ENCODE measurements at regions of chr1 and their contacts with region 1.

Region 1: DNA sequence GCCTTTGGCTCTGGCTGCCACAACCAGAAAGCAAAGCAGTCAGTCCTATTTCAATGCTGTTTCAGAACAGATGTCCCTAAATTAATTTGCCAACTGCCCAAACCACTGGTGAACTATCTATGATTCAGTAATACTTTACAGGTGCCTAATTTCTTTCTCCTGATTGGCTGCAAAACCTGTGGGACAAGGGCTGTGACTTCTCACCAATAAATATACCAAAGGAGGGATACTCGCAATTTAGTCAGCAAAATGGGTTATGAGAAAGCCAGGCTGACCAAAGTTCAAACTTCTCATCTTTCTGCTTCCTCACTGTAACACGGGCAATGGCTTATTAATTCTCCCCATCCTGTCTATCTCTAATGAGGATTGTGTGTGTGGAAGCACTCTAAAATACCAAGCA is 12.8 kb downstream of the GPN2 start:
- DNase-seq: no peak
- H3K4me3 ChIP-seq: no peak overlapping the region
- H3K27ac ChIP-seq: no peak overlapping the region; a peak in 1 of 4 replicates
- H3K4me1 ChIP-seq: peaks cover 0 to 6% of the 10 kb centered on the region in 2 experiments; a peak in 1 of 4 replicates
- H3K27me3 ChIP-seq: no peaks in the 10 kb centered on the region
- CTCF ChIP-seq: no peak
- EP300 ChIP-seq: no peak
- RAD21 ChIP-seq: no peak

Region 2: DNA sequence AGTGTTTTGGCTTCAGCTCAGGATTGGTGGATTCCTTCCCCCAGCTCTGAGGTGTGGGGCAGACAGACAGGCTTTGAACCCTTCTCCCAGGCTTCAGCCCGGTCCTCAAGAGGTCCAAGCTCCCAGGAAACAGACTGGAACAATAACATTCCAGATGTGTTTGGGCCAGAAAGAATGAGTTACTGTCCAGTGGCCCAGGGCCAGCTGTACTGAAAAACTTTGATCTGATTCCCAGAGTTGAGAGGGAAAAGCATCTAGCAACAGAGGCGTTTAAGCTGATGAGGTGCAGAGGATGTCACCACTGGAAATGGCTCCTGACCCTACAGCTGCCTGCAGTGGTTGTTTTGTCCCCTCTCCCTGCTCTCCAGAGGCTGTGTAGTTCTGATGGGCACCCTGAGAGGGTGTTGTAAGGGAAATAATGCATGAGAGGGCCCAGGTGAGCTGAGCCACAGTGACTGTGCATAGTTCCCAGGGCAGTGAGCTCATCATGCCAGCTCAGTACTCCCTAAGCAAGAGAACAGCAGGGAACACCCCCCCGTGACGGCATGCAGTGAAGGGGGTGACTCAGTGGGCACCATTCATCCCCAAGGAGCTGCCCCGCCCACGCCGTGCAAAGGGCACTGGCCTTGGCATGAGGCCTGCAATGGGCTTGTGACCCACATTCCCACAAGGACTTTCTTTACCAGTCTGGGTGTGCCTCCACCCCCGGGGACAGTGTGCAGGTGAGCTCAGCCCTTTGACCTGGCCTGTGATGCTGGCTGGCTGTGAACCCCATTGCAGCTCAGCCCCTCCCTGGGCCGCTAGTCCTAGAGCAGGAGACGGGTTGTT is 28.2 kb before region 1 on chr1:
- CTCF ChIA-PET with region 1: interaction called, 14 read pairs
- POLR2A ChIA-PET with region 1: no interaction called
- DNase-seq: no peak
- H3K4me3 ChIP-seq: no peak overlapping the region
- H3K27ac ChIP-seq: peak overlapping the region in 1 of 2 experiments; percentile 80; a peak in 2 of 4 replicates
- H3K4me1 ChIP-seq: peaks cover 0 to 8% of the 10 kb centered on the region in 2 experiments; a peak in 2 of 4 replicates
- H3K27me3 ChIP-seq: no peaks in the 10 kb centered on the region
- CTCF ChIP-seq: no peak
- EP300 ChIP-seq: no peak
- RAD21 ChIP-seq: no peak

Region 3: GRCh38 chr1:26856604-26857469 is 20.5 kb before region 1 on chr1:
- CTCF ChIA-PET with region 1: interaction called, 11 read pairs
- POLR2A ChIA-PET with region 1: no interaction called
- DNase-seq: no peak
- H3K4me3 ChIP-seq: no peak overlapping the region
- H3K27ac ChIP-seq: no peak overlapping the region
- H3K4me1 ChIP-seq: no peaks in the 10 kb centered on the region; a peak in 1 of 4 replicates
- H3K27me3 ChIP-seq: no peaks in the 10 kb centered on the region
- CTCF ChIP-seq: no peak
- EP300 ChIP-seq: no peak
- RAD21 ChIP-seq: no peak